ENCODE measurements at regions of chr1 and their contacts with region 1.

Region 1: GRCh38 chr1:160428655-160429054 is 28.3 kb downstream of the VANGL2 start:
- DNase-seq: no peak
- ATAC-seq: peak; percentile 83
- H3K4me3 ChIP-seq: no peak overlapping the region
- H3K27ac ChIP-seq: no peak overlapping the region
- H3K4me1 ChIP-seq: peaks cover 18% of the 10 kb centered on the region
- H3K27me3 ChIP-seq: no peaks in the 10 kb centered on the region
- CTCF ChIP-seq: peak; percentile 58

Region 2: GRCh38 chr1:160607011-160607671 is 178.5 kb after region 1 on chr1:
- intact Hi-C with region 1: loop called (anchors 5 kb)
- DNase-seq: no peak
- ATAC-seq: peak; percentile 99
- H3K4me3 ChIP-seq: no peak overlapping the region
- H3K27ac ChIP-seq: no peak overlapping the region
- H3K4me1 ChIP-seq: no peaks in the 10 kb centered on the region
- H3K27me3 ChIP-seq: no peaks in the 10 kb centered on the region
- CTCF ChIP-seq: peak; percentile 68

Measured in upper lobe of right lung (tissue), 1 donor.